ENCODE measurements at regions of chr11 and their contacts with region 1.

Region 1: GRCh38 chr11:123103326-123103980 is 41.5 kb upstream of the HSPA8 start:
- DNase-seq: peak; percentile 51
- H3K4me3 Mint-ChIP-seq: no peak overlapping the region
- H3K27ac Mint-ChIP-seq: peak overlapping the region; percentile 4
- H3K4me1 Mint-ChIP-seq: peaks cover 32% of the 10 kb centered on the region
- H3K27me3 Mint-ChIP-seq: peaks cover 7% of the 10 kb centered on the region

Region 2: DNA sequence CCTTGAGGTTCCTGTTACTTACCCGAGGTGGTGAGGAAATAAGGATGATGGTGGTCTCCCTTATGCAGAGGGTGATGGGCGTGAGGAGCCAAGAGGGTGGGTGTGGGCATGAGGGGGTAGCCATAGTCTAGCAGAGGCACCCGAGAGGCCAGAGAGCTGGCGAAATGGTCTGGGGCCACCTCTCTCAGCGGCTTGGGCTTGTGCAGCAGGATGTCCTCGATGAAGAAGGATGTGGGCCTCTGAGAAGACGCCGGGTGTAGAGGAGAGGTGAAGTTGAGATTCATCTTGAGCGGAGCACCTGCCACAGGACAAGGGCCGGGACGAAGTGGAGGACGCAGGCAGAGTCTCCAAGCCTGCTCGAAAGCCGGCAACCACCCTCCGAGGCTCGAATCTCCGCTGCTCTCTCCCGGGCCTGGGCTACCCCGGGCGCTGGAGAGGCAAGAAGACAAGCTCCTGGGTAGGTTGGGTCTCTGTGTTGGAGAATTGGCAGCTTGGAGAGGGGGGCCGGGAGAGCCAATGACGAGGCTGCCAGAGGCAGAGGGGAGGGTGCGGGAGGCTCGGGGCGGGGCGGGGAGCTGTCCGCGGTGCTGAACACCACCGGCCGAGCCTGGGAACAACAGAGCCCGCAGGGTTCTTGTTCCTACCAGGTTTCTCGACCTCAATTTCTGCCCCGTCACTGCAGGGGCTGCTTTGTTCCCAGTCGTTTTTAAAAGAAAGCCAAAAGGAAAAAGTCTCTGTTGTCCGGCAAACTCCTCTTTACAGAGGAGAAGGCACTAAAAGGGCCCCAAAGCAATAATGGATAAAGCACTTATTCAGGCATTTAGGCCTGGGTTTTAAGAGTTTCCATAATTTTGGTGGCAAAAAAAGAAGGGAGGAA is 121.8 kb before region 1 on chr11 and contains the start of gene BSX:
- CTCF ChIA-PET with region 1: no interaction called
- DNase-seq: peak; percentile 77
- H3K4me3 Mint-ChIP-seq: no peak within 1 kb of the TSS
- H3K27ac Mint-ChIP-seq: peak within 1 kb of the TSS; percentile 25
- H3K4me1 Mint-ChIP-seq: peaks cover 27% of the 10 kb centered on the region
- H3K27me3 Mint-ChIP-seq: peaks cover 96% of the 10 kb centered on the region

Region 3: DNA sequence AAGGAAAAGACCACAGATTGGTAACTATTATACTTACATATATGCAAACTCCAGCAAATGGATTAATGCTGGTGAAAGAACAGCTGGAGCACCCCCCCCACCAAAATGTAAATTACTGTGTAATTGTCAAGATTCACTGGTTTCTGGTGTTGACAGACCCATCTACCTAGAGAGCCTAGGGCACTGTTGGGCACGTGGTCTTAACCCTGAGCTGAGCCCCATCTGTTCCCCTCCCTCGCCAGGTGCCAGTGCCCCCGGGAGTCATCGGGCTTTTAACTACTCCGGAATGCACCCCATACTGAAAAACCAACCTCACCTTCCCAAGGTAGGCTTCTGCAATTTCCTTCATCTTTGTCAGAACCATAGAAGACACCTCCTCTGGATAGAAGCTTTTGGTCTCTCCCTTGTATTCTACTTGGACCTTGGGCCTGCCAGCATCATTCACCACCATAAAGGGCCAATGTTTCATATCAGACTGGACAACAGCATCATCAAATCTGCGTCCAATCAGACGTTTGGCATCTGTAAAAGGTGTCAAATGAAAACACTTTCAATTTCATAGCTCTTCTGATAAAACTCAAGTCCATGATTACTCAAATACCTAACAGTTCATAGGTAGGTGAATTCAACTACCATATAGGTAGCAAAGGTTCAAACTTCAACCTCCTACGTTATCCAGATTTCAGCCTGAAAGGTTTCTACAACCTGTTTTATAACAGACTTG is 43.0 kb before region 1 on chr11:
- CTCF ChIA-PET with region 1: interaction called, 32 read pairs
- DNase-seq: peak; percentile 37
- H3K4me3 Mint-ChIP-seq: peak overlapping the region; percentile 99
- H3K27ac Mint-ChIP-seq: peak overlapping the region; percentile 99
- H3K4me1 Mint-ChIP-seq: peaks cover 56% of the 10 kb centered on the region
- H3K27me3 Mint-ChIP-seq: peaks cover 7% of the 10 kb centered on the region

Region 4: GRCh38 chr11:123083623-123084029 is 19.8 kb before region 1 on chr11:
- CTCF ChIA-PET with region 1: interaction called, 31 read pairs
- DNase-seq: peak; percentile 75
- H3K4me3 Mint-ChIP-seq: peak overlapping the region; percentile 40
- H3K27ac Mint-ChIP-seq: peak overlapping the region; percentile 80
- H3K4me1 Mint-ChIP-seq: peaks cover 70% of the 10 kb centered on the region
- H3K27me3 Mint-ChIP-seq: no peaks in the 10 kb centered on the region

Region 5: GRCh38 chr11:123122341-123122740 is 18.9 kb after region 1 on chr11:
- CTCF ChIA-PET with region 1: no interaction called
- DNase-seq: no peak
- H3K4me3 Mint-ChIP-seq: no peak overlapping the region
- H3K27ac Mint-ChIP-seq: no peak overlapping the region
- H3K4me1 Mint-ChIP-seq: peaks cover 4% of the 10 kb centered on the region
- H3K27me3 Mint-ChIP-seq: peaks cover 17% of the 10 kb centered on the region

Region 6: DNA sequence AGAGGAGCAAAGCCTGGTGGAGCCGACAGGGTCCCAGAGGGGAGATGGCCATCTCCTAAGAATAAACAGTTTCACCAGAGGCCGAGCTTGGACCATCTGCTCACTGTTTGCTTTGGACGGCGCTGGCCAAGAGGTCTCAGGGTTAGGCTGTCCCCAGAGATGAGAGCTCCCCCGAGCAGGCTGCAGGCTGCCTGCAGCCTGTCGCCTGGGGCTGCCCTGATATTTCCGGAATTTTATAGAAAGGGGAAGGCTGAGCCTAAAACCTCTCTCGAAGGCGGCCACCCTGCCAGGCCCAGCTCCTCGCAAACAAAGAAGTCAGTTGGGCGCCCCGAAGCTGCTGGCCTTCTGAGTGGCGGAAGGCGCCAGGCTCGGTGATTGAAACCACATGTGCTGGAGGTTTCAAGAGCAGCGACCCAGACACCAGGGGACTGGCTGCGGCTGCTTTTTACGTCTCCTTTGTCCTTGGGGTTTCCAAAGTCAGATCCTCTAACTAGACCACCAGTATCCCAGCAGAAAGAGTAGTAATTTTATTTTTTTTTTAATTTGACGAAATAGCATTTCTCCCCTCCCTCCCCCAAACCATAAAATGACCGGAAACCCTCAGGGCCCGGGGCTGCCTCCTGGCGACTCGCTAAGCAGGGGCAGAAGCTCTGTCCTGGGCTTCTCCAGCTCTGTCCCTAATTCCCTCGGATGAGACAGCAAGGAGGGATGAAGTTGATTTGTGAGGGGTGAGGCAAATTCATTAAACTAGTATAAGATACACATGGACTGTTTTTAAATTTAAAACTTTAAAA is 34.2 kb after region 1 on chr11:
- CTCF ChIA-PET with region 1: no interaction called
- DNase-seq: no peak
- H3K4me3 Mint-ChIP-seq: no peak overlapping the region
- H3K27ac Mint-ChIP-seq: no peak overlapping the region
- H3K4me1 Mint-ChIP-seq: peaks cover 2% of the 10 kb centered on the region
- H3K27me3 Mint-ChIP-seq: peaks cover 12% of the 10 kb centered on the region

Region 7: DNA sequence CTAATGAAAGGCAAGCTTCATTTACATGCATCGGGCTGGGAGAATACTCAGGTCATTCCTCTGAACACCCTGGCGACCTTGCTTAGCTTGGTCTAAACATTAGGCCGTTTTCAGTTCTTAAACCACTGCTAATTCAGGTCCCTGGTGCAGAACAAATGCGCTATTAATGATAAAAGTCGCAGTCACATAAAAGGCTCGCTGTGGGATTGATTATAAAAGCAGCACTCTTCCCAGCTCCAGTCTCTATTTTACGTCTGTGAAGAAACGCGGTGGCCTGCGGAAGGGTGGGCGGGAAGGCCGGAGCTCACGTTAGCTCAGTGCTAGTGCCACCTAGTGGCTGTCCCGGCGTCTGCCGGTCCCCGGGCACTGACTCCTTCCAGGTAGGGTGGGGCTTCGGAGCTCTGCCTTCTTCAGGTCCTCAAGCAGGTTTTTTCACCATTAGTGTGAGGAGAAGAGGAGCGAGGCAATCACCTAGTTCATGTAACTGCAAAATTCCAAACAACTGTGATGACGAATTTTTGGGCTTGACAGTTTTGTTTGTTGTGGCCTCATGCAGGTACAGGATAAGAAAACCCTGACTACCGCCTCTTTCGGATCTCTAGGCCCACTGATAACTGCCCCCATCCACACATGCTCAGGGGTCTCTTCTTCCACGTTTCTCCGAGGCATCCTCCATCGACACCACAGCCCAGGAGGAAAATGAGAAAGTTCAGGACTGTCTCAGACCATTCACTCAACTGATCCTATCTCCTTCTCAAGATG is 158.1 kb after region 1 on chr11:
- CTCF ChIA-PET with region 1: interaction called, 15 read pairs
- DNase-seq: peak; percentile 78
- H3K4me3 Mint-ChIP-seq: no peak overlapping the region
- H3K27ac Mint-ChIP-seq: no peak overlapping the region
- H3K4me1 Mint-ChIP-seq: peaks cover 24% of the 10 kb centered on the region
- H3K27me3 Mint-ChIP-seq: peaks cover 51% of the 10 kb centered on the region